AG04450 (cell line): ENCODE measurements at regions of chr7 and their contacts with region 1.

Region 1: DNA sequence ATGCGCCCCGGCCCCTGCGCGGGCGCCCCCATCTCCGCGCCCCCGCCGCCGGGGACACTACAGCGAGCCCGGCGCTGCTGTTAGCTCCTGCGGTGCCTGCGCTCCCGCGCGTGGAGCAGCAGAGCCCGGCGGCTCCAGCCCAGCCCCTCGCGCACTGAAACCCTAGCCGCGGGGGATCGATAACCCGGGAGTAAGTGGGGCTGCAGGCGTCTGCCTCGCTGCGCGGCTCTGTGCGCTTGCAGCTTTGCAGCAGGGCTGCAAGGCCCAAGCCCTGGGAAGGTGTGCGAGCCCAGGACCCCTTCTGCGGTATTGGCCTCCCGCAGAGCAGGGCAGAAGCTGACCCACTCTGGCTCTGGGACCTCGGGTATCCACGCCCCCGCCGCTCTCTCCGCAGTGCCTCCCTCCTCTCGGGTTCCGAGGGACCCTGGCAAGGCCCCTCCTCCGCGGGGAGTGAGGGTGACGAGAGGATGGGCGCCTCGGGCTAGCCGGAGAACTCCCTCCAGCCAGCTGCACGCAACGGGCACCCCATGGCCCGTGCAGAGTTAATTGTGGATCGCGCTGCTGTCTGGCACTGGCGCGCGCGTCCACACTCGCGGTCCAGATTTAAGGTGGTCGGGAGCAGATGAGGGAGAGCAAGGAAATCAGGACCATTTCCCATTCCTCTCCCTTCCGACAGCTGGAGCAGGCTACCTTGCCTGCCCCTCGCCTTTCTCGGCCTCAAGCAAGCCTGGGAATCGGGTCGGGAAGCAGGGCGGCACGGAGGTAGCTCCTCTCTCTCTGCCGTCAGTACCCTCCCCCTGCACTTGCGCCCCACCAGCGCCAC is 2.1 kb downstream of the SHH start:
- DNase-seq: no peak
- H3K4me3 ChIP-seq: no peak overlapping the region
- H3K27ac ChIP-seq: no peak overlapping the region
- H3K27me3 ChIP-seq: peaks cover 85% of the 10 kb centered on the region
- CTCF ChIP-seq: no peak

Region 2: GRCh38 chr7:155791836-155792235 is 18.3 kb before region 1 on chr7:
- CTCF ChIA-PET with region 1: no interaction called
- POLR2A ChIA-PET with region 1: no interaction called
- DNase-seq: no peak
- H3K4me3 ChIP-seq: no peak overlapping the region
- H3K27ac ChIP-seq: no peak overlapping the region
- H3K27me3 ChIP-seq: peaks cover 6% of the 10 kb centered on the region
- CTCF ChIP-seq: no peak

Region 3: GRCh38 chr7:156979711-156980110 is 1169.6 kb after region 1 on chr7:
- CTCF ChIA-PET with region 1: no interaction called
- POLR2A ChIA-PET with region 1: interaction called, 21 read pairs
- DNase-seq: no peak
- H3K4me3 ChIP-seq: no peak overlapping the region
- H3K27ac ChIP-seq: no peak overlapping the region
- H3K27me3 ChIP-seq: no peaks in the 10 kb centered on the region
- CTCF ChIP-seq: no peak